Gastrocnemius medialis (tissue), 4 donors: ENCODE measurements at regions of chr1 and their contacts with region 1.

Region 1: DNA sequence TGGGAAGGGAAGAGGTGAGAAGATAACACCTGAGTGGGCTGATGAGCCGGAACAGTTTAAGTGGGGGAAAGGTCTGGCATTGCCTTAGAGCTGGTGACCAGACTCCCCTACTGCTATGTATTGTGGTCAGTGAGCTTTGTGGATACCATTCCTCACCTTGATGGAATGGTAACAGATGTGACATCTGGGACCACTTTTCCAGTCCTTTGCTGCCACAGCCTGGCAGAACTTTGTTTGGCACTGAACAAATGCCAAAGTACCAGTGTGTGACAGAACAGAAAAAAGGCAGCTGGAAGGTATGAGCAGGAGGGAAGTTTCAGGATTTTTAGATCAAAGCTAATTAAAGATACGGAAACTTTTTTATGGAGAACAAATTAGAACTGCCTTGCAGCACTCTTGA is 6.2 kb downstream of the MED8 start:
- DNase-seq: no peak
- ATAC-seq: no peak
- H3K4me3 ChIP-seq: no peak overlapping the region
- H3K27ac ChIP-seq: no peak overlapping the region
- H3K4me1 ChIP-seq: peaks cover 9 to 10% of the 10 kb centered on the region in 2 donors
- H3K27me3 ChIP-seq: no peaks in the 10 kb centered on the region
- CTCF ChIP-seq: peak in 2 of 5 experiments; percentile 8 to 26
- POLR2A ChIP-seq: no peak

Region 2: DNA sequence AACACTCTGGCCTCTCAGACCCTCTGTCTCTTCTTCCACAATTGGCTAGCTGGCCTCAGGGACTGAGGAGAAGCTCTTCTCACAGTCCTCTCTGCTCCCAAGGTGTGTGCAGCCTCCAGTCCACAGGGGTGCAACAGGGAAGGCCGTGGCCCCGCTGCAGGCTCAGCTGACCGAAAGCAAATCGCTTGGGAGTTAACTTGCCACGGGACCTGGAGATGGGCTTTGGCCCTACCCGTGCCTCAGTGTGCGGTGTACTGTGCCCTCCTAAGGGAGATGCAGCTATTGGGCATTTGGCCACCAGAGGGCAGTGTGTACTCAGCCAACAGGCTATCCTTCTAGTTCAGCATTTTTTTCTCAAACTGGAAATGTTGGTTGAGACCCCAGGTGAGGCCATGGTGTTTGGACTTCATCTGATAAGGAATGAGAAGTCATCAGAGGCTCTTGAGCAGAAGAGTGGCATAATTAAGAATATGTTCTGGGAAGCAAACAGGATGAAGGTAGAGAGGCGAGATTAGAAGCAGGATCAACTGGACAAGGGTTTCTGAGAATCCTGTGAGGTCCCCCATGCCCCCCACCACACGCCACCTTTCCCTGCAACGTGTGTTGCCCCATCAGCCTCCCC is 156.2 kb before region 1 on chr1:
- in situ Hi-C with region 1: no loop called
- intact Hi-C with region 1: loop called (anchors 1 kb)
- DNase-seq: peak; percentile 50 to 51
- ATAC-seq: peak; percentile 67 to 85
- H3K4me3 ChIP-seq: no peak overlapping the region
- H3K27ac ChIP-seq: no peak overlapping the region
- H3K4me1 ChIP-seq: no peaks in the 10 kb centered on the region
- H3K27me3 ChIP-seq: no peaks in the 10 kb centered on the region
- CTCF ChIP-seq: peak; percentile 81 to 93 (median 91)
- POLR2A ChIP-seq: no peak

Region 3: GRCh38 chr1:43304314-43304681 is 79.2 kb before region 1 on chr1:
- in situ Hi-C with region 1: no loop called
- intact Hi-C with region 1: no loop called
- DNase-seq: no peak
- ATAC-seq: no peak
- H3K4me3 ChIP-seq: peak overlapping the region in 3 of 4 donors; percentile 47 to 54 (median 48)
- H3K27ac ChIP-seq: peak overlapping the region in 3 of 4 donors; percentile 74 to 81 (median 75)
- H3K4me1 ChIP-seq: no peaks in the 10 kb centered on the region
- H3K27me3 ChIP-seq: no peaks in the 10 kb centered on the region
- CTCF ChIP-seq: no peak
- POLR2A ChIP-seq: no peak